ENCODE measurements at regions of chr2 and their contacts with region 1.

Region 1: GRCh38 chr2:171574149-171574795 is 52.0 kb downstream of the CYBRD1 start:
- DNase-seq: peak; percentile 84
- H3K4me3 ChIP-seq: no peak overlapping the region
- H3K27ac ChIP-seq: no peak overlapping the region
- H3K4me1 ChIP-seq: no peaks in the 10 kb centered on the region
- H3K27me3 ChIP-seq: peaks cover 2 to 3% of the 10 kb centered on the region in 2 experiments
- CTCF ChIP-seq: peak; percentile 91 to 94
- POLR2A ChIP-seq: no peak

Region 2: GRCh38 chr2:171592036-171592555 is 17.8 kb after region 1 on chr2:
- CTCF ChIA-PET with region 1: interaction called, 3 read pairs
- POLR2A ChIA-PET with region 1: interaction called, 10 read pairs
- dilution Hi-C with region 1: no loop called
- intact Hi-C with region 1: no loop called
- DNase-seq: no peak
- H3K4me3 ChIP-seq: no peak overlapping the region
- H3K27ac ChIP-seq: no peak overlapping the region
- H3K4me1 ChIP-seq: no peaks in the 10 kb centered on the region
- H3K27me3 ChIP-seq: peaks cover 5 to 13% of the 10 kb centered on the region in 2 experiments
- CTCF ChIP-seq: no peak
- POLR2A ChIP-seq: no peak

Region 3: DNA sequence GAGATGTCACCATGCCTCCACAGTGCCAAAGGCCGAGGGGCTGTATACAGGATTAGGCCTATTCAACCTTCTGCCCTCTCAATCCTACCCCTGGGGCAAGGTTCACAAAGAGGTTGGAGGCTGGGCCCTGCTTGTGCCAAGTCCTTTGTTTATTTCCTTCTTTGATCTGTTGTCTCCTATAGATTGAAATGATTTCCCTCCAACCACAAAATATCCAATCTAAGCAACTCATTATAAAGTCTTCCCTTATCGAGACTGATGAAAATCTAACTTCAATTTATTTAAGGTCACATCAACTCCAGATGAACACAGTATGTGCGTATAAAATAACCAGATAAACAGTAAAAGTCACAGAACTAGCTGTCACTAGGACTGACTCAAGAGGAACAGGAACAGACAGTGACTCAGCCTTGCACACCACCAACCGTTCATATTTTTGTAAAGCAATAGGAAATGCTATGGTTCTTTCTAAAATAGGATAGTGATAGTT is 224.0 kb after region 1 on chr2:
- CTCF ChIA-PET with region 1: no interaction called
- POLR2A ChIA-PET with region 1: no interaction called
- dilution Hi-C with region 1: no loop called
- intact Hi-C with region 1: loop called (anchors 10 kb)
- DNase-seq: peak; percentile 81
- H3K4me3 ChIP-seq: peak overlapping the region in 1 of 3 experiments; percentile 33
- H3K27ac ChIP-seq: peak overlapping the region; percentile 86
- H3K4me1 ChIP-seq: peaks cover 18% of the 10 kb centered on the region
- H3K27me3 ChIP-seq: no peaks in the 10 kb centered on the region
- CTCF ChIP-seq: no peak
- POLR2A ChIP-seq: no peak

Region 4: GRCh38 chr2:172113617-172114016 is 539.3 kb after region 1 on chr2:
- CTCF ChIA-PET with region 1: interaction called, 21 read pairs
- POLR2A ChIA-PET with region 1: no interaction called
- dilution Hi-C with region 1: no loop called
- intact Hi-C with region 1: no loop called
- DNase-seq: peak; percentile 42
- H3K4me3 ChIP-seq: no peak overlapping the region
- H3K27ac ChIP-seq: no peak overlapping the region
- H3K4me1 ChIP-seq: peaks cover under 1% of the 10 kb centered on the region
- H3K27me3 ChIP-seq: no peaks in the 10 kb centered on the region
- CTCF ChIP-seq: no peak
- POLR2A ChIP-seq: no peak